ENCODE measurements at regions of chr1 and their contacts with region 1.

Region 1: DNA sequence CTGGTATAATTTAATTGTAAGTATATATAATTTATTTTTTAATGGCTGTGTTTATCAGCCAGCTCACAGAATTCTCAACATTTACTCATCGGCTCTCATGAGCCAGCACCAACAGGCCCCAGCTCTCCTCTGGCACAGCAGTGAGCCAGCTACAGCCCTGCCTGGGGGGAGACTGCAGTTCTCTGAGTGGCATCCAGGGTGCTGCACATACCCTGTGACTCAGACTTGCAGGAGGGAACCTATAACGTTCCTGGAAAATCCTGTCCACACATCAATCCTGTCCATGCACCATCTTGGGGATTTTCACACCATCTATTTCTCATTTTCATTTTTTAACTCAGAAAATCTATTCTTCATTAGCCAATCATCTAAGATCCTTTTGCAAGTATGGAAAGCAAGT is 36.5 kb downstream of the FHAD1 start:
- DNase-seq: peak; percentile 87
- H3K4me3 Mint-ChIP-seq: no peak overlapping the region
- H3K27ac Mint-ChIP-seq: no peak overlapping the region
- H3K4me1 Mint-ChIP-seq: peaks cover 21% of the 10 kb centered on the region
- H3K27me3 Mint-ChIP-seq: no peaks in the 10 kb centered on the region
- CTCF ChIP-seq: peak; percentile 35

Region 2: DNA sequence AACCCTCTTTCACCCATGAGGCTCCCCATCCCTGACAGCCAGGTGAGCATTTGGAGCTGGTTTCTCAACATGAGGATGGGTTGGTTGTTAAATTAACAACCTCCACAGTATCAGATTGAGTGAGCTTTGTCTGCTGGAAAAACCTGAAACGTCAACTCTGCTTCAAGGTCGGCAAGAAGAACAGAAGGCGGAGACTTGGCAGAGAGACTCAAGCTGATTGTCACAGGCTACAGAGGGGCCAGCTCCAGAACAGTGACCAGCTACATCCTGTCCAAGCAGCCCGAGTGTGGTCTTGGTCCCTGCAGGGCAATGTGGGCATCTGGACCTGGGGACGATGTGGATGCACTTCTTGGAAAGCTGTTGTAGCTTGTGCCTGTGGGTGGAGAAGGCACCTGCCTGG is 166.6 kb before region 1 on chr1:
- CTCF ChIA-PET with region 1: no interaction called
- POLR2A ChIA-PET with region 1: no interaction called
- intact Hi-C with region 1: no loop called
- DNase-seq: no peak
- H3K4me3 Mint-ChIP-seq: no peak overlapping the region
- H3K27ac Mint-ChIP-seq: no peak overlapping the region
- H3K4me1 Mint-ChIP-seq: no peaks in the 10 kb centered on the region
- H3K27me3 Mint-ChIP-seq: peaks cover 24% of the 10 kb centered on the region
- CTCF ChIP-seq: no peak

Region 3: DNA sequence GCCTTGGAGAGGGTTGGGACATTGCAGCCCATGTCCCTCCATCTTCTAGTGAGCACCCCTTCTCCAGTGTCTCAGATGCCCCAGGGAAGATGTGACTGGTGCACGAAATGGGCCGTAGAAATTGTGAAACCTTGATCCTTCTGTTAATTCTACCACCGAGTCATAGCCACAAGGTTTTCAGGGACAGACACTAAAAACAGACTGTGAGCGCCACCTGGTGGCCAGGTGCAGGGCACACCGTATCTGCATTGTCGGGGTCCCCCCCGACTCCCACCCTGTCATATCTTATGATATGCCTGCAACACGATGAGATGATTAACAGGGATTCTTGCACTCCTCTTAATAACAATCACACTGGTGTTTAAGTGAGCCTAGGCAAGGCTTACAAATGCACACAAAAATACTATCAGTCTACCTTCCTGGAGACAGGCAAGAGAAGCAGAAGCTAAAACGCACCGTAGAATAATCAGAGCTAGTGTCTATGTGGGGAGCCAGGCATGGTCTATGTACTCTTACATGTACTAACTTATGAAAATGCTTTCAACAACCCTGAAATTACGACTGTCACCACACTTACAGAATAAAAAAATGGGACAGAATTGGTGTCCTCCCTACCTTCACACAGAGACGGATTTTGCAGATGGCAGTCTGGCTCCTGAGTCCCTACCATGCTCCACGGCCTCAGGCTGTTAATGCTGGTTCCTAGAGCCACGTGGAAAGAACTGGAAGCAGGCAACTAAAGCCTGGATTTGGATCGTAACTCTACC is 21.4 kb after region 1 on chr1:
- CTCF ChIA-PET with region 1: interaction called, 10 read pairs
- POLR2A ChIA-PET with region 1: interaction called, 3 read pairs
- intact Hi-C with region 1: no loop called
- DNase-seq: peak; percentile 69
- H3K4me3 Mint-ChIP-seq: no peak overlapping the region
- H3K27ac Mint-ChIP-seq: no peak overlapping the region
- H3K4me1 Mint-ChIP-seq: no peaks in the 10 kb centered on the region
- H3K27me3 Mint-ChIP-seq: no peaks in the 10 kb centered on the region
- CTCF ChIP-seq: peak; percentile 84

Region 4: GRCh38 chr1:15382601-15383518 is 99.3 kb after region 1 on chr1:
- CTCF ChIA-PET with region 1: no interaction called
- POLR2A ChIA-PET with region 1: no interaction called
- intact Hi-C with region 1: no loop called
- DNase-seq: no peak
- H3K4me3 Mint-ChIP-seq: no peak overlapping the region
- H3K27ac Mint-ChIP-seq: no peak overlapping the region
- H3K4me1 Mint-ChIP-seq: peaks cover 5% of the 10 kb centered on the region
- H3K27me3 Mint-ChIP-seq: no peaks in the 10 kb centered on the region
- CTCF ChIP-seq: no peak